ENCODE measurements at regions of chr5 and their contacts with region 1.

Region 1: DNA sequence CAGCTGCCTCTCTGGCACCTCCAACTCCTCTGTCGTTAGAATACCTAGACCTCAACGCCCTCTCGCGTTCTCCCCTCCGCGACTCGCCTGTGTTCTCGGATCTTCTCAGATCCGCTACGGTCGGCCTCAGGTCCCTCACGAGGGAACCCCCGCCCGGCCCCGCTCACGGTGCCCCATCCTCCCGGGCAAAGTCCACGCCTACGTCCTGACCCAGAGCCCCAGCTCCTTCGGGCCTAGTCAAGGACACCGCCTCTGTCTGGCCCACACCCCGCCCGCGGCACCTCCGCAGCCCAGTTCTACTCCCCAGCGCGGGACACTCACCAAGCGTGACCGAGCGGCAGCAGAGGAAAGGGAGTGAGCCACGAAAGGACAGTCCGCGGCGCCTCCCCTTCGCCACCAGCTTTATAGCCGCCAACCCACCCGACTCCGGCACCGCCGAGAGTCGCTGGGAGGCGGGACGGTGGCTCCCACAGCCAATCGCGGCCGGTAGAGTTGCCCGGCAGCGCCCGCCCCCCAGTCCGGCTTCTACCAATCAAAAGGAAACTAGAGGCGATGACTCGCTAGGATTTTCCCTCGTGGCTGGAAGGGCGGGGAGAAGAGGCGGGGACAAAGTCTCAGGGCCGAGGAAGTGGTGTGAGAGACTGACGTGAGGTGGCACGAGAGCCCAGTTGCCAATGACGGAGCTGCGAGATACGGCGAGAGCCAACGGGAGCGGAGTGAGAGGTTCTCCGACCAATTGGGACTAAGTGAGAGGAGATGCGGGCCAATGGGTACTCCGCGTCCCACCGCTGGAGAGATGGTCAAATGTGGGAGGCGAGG is at the start of gene HMGCS1:
- DNase-seq: peak; percentile 100
- H3K4me3 ChIP-seq: peak within 1 kb of the TSS; percentile 76 to 94 (median 90)
- H3K27ac ChIP-seq: peak within 1 kb of the TSS; percentile 90 to 94 (median 92)
- H3K4me1 ChIP-seq: peaks cover 19 to 49% (median 38%) of the 10 kb centered on the region in 4 donors
- H3K27me3 ChIP-seq: no peaks in the 10 kb centered on the region
- CTCF ChIP-seq: no peak
- EP300 ChIP-seq: no peak
- POLR2A ChIP-seq: peak; percentile 77
- total RNA-seq, gene HMGCS1: 11.1 to 19.9 (median 12.7) TPM

Region 2: GRCh38 chr5:43120720-43121564 is 192.3 kb before region 1 on chr5 and contains the start of gene ZNF131:
- intact Hi-C with region 1: loop called (anchors 5 kb)
- DNase-seq: peak; percentile 98
- H3K4me3 ChIP-seq: peak within 1 kb of the TSS; percentile 71 to 90 (median 82)
- H3K27ac ChIP-seq: peak within 1 kb of the TSS; percentile 96 to 100 (median 98)
- H3K4me1 ChIP-seq: peaks cover 31 to 46% (median 40%) of the 10 kb centered on the region in 4 donors
- H3K27me3 ChIP-seq: no peaks in the 10 kb centered on the region
- CTCF ChIP-seq: no peak
- EP300 ChIP-seq: peak; percentile 61
- POLR2A ChIP-seq: no peak
- total RNA-seq, gene ZNF131: 22.1 to 35.3 (median 23.7) TPM

Region 3: DNA sequence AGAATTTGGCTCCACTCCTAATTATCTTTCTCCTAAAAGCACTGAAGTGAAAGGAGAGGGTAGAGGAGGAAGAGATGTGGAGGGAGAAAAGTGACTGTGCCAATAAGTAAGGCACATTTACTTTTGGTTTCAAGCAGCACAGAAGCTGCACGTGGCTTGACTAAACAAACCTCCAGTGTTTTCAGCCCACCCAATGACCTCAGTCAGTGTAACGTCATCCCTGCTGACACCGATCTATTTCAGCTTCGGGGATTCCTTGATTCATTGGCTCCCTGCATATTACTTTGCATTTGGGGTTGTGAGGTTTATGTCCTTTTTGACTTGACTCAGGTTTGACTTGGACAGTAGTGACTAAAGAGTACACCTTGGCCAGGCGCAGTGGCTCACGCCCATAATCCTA is 156.9 kb before region 1 on chr5:
- intact Hi-C with region 1: no loop called
- DNase-seq: no peak
- H3K4me3 ChIP-seq: no peak overlapping the region
- H3K27ac ChIP-seq: no peak overlapping the region
- H3K4me1 ChIP-seq: peaks cover 0 to 20% (median 11%) of the 10 kb centered on the region in 4 donors
- H3K27me3 ChIP-seq: no peaks in the 10 kb centered on the region
- CTCF ChIP-seq: no peak
- EP300 ChIP-seq: no peak
- POLR2A ChIP-seq: no peak

Region 4: GRCh38 chr5:43191740-43192557 is 121.3 kb before region 1 on chr5 and contains the start of gene NIM1K:
- intact Hi-C with region 1: loop called (anchors 10 kb)
- DNase-seq: no peak
- H3K4me3 ChIP-seq: peak within 1 kb of the TSS; percentile 63 to 72 (median 68)
- H3K27ac ChIP-seq: peak within 1 kb of the TSS; percentile 30 to 75 (median 60)
- H3K4me1 ChIP-seq: peaks cover 11 to 36% (median 31%) of the 10 kb centered on the region in 4 donors
- H3K27me3 ChIP-seq: no peaks in the 10 kb centered on the region
- CTCF ChIP-seq: no peak
- EP300 ChIP-seq: no peak
- POLR2A ChIP-seq: no peak
- total RNA-seq, gene NIM1K: 0.42 to 2.3 (median 1.6) TPM

Region 5: DNA sequence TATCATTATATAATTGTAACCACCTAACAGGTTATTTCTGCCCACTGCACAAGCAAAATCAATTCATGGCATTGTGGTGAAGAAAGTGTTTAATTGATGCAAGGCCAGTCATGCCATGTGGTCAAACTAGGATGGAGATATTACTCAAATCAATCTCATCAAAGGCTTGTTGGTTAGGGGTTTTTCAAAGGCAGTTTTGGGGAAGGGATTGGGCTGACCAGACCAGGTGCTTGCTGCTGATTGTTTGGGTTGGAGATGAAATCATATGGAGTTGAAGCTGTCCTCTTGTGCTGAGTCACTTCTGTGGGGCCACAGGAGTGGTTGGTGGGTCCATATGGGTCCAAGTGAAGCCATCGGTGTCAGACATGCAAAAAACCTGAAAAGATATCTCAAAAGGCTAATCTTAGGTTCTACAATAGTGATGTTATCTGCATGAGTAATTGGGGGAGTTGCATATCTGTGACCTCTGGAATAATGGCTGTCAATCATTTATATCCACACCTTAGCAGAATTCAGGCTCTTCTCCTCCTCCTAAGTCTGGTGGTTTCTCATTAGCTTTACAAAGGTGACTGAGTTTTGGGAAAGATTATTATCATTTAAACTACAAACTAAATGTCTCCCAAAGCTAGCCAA is 44.9 kb before region 1 on chr5:
- intact Hi-C with region 1: no loop called
- DNase-seq: no peak
- H3K4me3 ChIP-seq: no peak overlapping the region
- H3K27ac ChIP-seq: no peak overlapping the region
- H3K4me1 ChIP-seq: no peaks in the 10 kb centered on the region
- H3K27me3 ChIP-seq: no peaks in the 10 kb centered on the region
- CTCF ChIP-seq: no peak
- EP300 ChIP-seq: no peak
- POLR2A ChIP-seq: no peak

Region 6: GRCh38 chr5:43389679-43390329 is 76.6 kb after region 1 on chr5:
- intact Hi-C with region 1: loop called (anchors 5 kb)
- DNase-seq: peak; percentile 92
- H3K4me3 ChIP-seq: no peak overlapping the region
- H3K27ac ChIP-seq: no peak overlapping the region
- H3K4me1 ChIP-seq: peaks cover 4 to 10% (median 6%) of the 10 kb centered on the region in 4 donors
- H3K27me3 ChIP-seq: no peaks in the 10 kb centered on the region
- CTCF ChIP-seq: peak; percentile 78 to 92 (median 80)
- EP300 ChIP-seq: no peak
- POLR2A ChIP-seq: no peak

Region 7: DNA sequence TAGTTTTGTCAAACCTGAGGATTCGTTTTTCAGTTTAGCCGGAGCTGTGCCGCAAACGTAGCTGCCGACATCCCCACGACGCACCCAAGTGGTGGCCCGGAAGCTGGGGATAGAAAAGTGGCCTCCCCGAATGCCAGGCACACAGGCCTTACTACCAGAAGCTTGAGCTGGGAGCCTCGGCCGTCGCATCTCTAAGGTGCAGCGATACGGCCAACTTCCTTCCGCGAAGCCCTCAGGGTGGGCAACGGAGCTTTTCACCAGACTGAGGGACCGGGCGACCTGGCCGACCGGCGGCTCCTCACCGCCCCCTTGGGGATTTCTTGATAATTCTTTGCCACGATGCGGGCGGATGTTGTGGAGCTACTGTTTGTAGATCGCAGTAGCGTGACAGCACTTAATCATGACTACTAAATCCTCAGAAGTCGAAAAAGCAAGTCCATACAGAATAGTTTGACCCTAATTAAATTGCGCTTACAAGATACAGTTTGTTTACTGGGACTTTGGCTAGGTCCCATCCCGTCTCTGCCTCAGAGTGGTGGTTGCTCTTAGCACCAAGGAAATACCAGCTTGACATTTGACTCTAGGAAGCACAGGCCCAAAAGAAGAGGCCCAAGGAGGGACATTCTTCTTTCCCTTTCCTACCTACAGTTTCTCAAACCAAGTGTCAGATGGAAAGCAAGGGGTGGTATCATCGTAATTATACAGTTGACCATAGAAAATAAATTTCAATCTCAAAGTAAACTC is 171.0 kb after region 1 on chr5:
- intact Hi-C with region 1: loop called (anchors 5 kb)
- DNase-seq: peak; percentile 96
- H3K4me3 ChIP-seq: peak overlapping the region; percentile 76 to 89 (median 84)
- H3K27ac ChIP-seq: peak overlapping the region; percentile 91 to 97 (median 95)
- H3K4me1 ChIP-seq: peaks cover 14 to 31% (median 22%) of the 10 kb centered on the region in 4 donors
- H3K27me3 ChIP-seq: no peaks in the 10 kb centered on the region
- CTCF ChIP-seq: peak; percentile 68 to 79 (median 72)
- EP300 ChIP-seq: no peak
- POLR2A ChIP-seq: no peak

Measured in esophagus muscularis mucosa (tissue), 4 donors.